Activated T-helper 1 cell treated with anti-CD3 and anti-CD28 coated beads, Interleukin-12 subunit alpha, Interleukin-12 subunit beta, Interleukin-2, Interleukin-4 antibody, amounts not matched to agents 30 ng/mL and 10 ng/mL and 1 ng/mL, durations not matched to agents 14 hours and 24 hours and 36 hours (primary cell): ENCODE measurements at regions of chr1 and their contacts with region 1.

Region 1: DNA sequence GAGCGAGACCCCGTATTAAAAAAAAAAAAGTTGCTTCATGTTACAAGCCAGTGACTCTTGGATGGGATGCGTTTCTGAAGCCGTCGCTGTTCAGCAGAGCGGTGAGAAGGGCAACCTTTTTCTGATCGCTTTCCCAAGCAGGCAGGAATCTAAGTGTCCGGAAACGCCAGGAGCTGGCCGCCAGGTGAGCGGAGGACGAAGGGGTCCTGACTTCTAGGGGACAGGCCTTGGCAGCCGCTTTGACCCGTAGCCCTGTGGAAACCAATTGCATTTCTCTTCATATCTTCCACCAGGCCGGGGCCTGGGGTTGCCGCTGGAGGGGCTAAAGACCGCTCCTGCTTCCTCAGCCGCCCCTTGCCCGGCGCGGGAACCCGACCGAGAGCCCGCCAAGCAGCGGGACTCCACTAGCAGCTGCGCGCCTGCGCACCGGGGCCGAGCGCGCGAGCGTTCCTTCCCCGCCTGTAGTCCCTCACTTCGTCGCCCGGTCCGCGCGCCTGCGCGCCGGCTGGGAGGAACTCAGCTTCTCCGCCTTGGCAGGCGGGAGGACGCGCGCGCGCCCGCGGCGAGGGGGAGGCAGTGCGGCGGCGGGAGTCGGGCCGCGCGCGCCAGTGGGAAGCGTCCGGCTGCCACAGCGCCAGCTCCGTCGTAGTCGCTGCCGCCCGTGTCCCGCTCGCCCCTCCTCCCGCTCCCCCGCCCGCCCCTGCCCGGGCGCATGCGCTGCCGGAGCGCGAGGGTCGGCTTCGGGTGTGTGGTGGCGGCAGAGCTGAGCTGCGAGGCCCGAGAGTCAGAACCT is at the start of gene SPEN:
- DNase-seq: peak; percentile 98
- H3K4me3 Mint-ChIP-seq: peak within 1 kb of the TSS; percentile 94
- H3K27ac Mint-ChIP-seq: peak within 1 kb of the TSS; percentile 95
- H3K4me1 Mint-ChIP-seq: peaks cover 41% of the 10 kb centered on the region
- H3K27me3 Mint-ChIP-seq: no peaks in the 10 kb centered on the region
- total RNA-seq, gene SPEN: 81.9 and 87.6 TPM in 2 replicates

Region 2: GRCh38 chr1:15409388-15410222 is 437.7 kb before region 1 on chr1 and contains the start of gene EFHD2:
- intact Hi-C with region 1: loop called (anchors 10 kb)
- DNase-seq: peak; percentile 83
- H3K4me3 Mint-ChIP-seq: peak within 1 kb of the TSS; percentile 96
- H3K27ac Mint-ChIP-seq: peak within 1 kb of the TSS; percentile 94
- H3K4me1 Mint-ChIP-seq: peaks cover 47% of the 10 kb centered on the region
- H3K27me3 Mint-ChIP-seq: peaks cover 29% of the 10 kb centered on the region
- total RNA-seq, gene EFHD2: 100 and 101 TPM in 2 replicates

Region 3: GRCh38 chr1:15918962-15919715 is 71.8 kb after region 1 on chr1:
- intact Hi-C with region 1: loop called (anchors 1 kb)
- DNase-seq: peak; percentile 60
- H3K4me3 Mint-ChIP-seq: peak overlapping the region; percentile 44
- H3K27ac Mint-ChIP-seq: peak overlapping the region; percentile 42
- H3K4me1 Mint-ChIP-seq: peaks cover 42% of the 10 kb centered on the region
- H3K27me3 Mint-ChIP-seq: no peaks in the 10 kb centered on the region

Region 4: DNA sequence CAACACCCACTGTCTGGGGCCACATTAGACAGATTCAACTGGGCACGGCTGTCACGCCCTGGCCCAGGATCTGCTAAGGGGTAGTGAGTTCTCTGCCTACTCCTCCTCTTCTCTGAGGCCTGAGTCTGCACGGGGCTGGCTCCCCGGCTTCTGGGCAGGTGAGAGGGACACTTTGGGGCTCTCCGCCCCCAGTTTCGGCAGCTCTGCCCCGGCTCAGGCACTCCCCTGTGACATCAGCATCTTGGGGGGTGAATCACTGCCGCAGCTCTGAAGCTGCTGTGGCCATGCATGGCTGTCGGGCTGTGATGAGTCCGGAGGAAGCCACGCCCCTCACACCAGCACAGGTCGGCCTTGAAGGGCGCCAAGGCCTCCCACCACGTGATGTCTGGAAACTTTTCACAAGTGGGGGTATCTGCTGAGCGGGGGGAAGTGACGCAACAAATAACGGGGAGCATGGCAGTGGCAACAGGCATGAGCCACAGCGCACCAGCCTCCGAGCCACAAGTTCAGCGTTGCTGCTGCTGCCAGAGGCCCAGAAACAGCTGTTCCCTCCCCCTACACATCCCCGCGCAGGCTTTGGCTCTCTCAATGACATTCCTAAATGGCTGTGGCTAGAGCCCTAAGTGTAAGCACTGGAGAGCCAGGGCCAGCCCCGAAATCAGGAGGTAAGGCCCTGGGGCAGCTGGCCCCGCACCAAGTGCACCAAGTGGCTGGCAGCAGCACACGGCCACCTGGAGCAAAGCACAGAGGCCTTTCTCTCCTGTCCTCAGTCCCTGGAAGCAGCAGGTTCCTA is 102.4 kb after region 1 on chr1:
- intact Hi-C with region 1: loop called (anchors 1 kb)
- DNase-seq: peak; percentile 53
- H3K4me3 Mint-ChIP-seq: peak overlapping the region; percentile 73
- H3K27ac Mint-ChIP-seq: peak overlapping the region; percentile 98
- H3K4me1 Mint-ChIP-seq: peaks cover 77% of the 10 kb centered on the region
- H3K27me3 Mint-ChIP-seq: no peaks in the 10 kb centered on the region

Region 5: DNA sequence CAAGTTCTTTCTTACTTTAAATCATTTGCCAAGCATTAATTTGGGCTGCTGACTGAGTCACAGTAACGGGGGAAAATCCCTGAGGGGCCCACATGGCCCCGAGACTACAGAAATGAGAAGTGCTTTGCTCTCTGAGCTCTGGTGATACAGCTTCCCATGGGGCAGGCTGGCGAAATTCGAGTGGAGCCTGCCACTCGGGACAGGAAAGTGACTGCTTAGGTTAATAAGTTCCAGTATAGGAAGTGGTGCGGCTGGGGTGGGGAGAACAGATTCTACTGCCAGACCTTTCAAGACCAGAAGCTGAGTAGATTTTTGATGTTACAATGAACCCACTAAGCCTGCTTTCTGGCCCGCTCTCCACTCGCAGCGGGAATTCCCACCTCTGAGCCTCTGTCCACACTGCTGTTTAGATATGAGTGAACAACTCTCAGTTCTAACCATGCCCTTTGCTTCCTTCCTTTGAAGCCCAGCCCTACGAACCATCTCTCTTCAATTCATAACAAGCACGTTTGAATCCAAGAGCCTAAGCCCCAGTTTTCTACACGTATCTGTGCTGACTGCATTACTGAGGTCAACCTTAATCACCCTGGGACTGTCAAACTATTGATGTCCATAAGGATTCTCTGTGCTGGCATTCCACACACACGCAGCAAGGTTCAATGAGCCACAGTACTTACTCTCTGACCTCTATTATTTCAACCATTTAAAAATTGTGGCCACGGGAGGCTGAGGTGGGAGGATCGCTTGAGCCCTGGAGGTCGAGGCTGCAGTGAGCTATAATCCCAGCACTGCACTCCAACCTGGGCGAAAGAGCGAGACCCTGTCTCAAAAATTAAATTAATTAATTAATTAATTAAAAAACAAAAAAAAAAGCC is 119.0 kb after region 1 on chr1:
- intact Hi-C with region 1: loop called (anchors 1 kb)
- DNase-seq: peak; percentile 72
- H3K4me3 Mint-ChIP-seq: peak overlapping the region; percentile 79
- H3K27ac Mint-ChIP-seq: peak overlapping the region; percentile 95
- H3K4me1 Mint-ChIP-seq: peaks cover 77% of the 10 kb centered on the region
- H3K27me3 Mint-ChIP-seq: no peaks in the 10 kb centered on the region

Region 6: GRCh38 chr1:15975805-15976680 is 128.7 kb after region 1 on chr1 and contains the start of gene ZBTB17:
- intact Hi-C with region 1: loop called (anchors 1 kb)
- DNase-seq: peak; percentile 94
- H3K4me3 Mint-ChIP-seq: peak within 1 kb of the TSS; percentile 89
- H3K27ac Mint-ChIP-seq: peak within 1 kb of the TSS; percentile 93
- H3K4me1 Mint-ChIP-seq: peaks cover 51% of the 10 kb centered on the region
- H3K27me3 Mint-ChIP-seq: peaks cover 2% of the 10 kb centered on the region
- total RNA-seq, gene ZBTB17: 62.6 and 68.8 TPM in 2 replicates

Region 7: GRCh38 chr1:15989776-15990490 is 142.6 kb after region 1 on chr1:
- intact Hi-C with region 1: no loop called
- DNase-seq: no peak
- H3K4me3 Mint-ChIP-seq: no peak overlapping the region
- H3K27ac Mint-ChIP-seq: no peak overlapping the region
- H3K4me1 Mint-ChIP-seq: peaks cover 5% of the 10 kb centered on the region
- H3K27me3 Mint-ChIP-seq: peaks cover 5% of the 10 kb centered on the region